ENCODE measurements at regions of chr15 and their contacts with region 1.

Region 1: GRCh38 chr15:61479613-61480012 is 250.5 kb upstream of the RORA start:
- DNase-seq: no peak
- H3K4me3 ChIP-seq: no peak overlapping the region
- CTCF ChIP-seq: no peak

Region 2: GRCh38 chr15:61393949-61394348 is 85.7 kb before region 1 on chr15:
- in situ Hi-C with region 1: loop called (anchors 5 kb)
- DNase-seq: no peak
- H3K4me3 ChIP-seq: no peak overlapping the region
- CTCF ChIP-seq: no peak